PC-9 (cell line): ENCODE measurements at regions of chr5 and their contacts with region 1.

Region 1: DNA sequence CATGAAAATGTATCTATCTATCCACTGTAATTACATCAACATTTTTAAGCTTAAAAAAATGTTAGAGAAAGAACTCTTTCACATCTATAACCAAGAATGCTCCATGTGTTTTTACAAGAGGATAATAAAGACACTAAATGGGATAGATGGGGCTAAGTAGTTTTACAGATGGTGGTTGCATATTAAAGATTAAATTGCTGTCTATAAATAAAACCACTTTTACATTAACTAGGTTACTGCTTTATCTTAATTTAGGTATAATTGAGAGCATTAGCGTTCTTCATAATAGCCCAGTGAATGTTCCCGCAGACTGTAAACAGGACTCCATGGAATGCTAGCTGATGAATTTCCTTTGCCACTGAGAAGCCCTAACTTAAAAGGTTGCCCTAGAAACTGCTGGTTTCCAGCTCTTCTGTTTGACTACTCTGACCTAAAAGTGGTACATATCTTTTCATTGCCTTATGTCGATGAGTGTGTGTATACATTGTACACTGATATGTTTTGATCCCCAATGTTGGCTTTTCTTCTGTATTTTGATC is 117.9 kb downstream of the SGCD start:
- DNase-seq: no peak
- H3K4me3 ChIP-seq: no peak overlapping the region
- H3K27ac ChIP-seq: no peak overlapping the region
- H3K4me1 ChIP-seq: no peaks in the 10 kb centered on the region
- H3K27me3 ChIP-seq: peaks cover 9% of the 10 kb centered on the region; the same call in 1 of the 2 replicates
- CTCF ChIP-seq: no peak

Region 2: GRCh38 chr5:155969537-155969936 is 475.3 kb before region 1 on chr5:
- CTCF ChIA-PET with region 1: no interaction called
- POLR2A ChIA-PET with region 1: no interaction called
- intact Hi-C with region 1: no loop called
- DNase-seq: no peak
- H3K4me3 ChIP-seq: no peak overlapping the region
- H3K27ac ChIP-seq: no peak overlapping the region
- H3K4me1 ChIP-seq: no peaks in the 10 kb centered on the region
- H3K27me3 ChIP-seq: no peaks in the 10 kb centered on the region
- CTCF ChIP-seq: no peak

Region 3: DNA sequence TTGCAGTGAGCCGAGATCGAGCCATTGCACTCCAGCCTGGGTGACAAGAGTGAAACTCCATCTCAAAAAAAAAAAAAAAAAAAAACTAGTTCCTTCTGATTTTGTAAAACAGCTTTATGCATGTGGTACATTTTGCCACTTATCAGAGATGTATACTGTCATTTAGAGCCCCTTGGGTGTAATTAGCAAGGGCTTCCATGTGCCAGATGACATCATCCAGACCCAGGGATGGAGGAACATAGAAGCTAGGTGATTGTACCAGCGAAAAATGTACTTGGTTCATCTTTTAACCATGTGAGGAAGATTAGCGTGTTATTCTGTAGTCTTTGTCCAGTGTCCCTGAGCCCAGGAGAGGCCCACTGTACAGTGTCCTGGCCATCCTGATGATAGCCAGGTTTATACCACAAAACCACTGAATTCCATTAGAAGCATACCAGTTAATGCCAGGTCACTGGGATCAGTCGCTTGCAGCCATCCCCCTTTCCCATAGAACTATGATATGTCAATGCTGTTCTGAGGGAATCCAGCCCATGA is 357.2 kb before region 1 on chr5:
- CTCF ChIA-PET with region 1: no interaction called
- POLR2A ChIA-PET with region 1: no interaction called
- intact Hi-C with region 1: no loop called
- DNase-seq: no peak
- H3K4me3 ChIP-seq: no peak overlapping the region
- H3K27ac ChIP-seq: no peak overlapping the region
- H3K4me1 ChIP-seq: no peaks in the 10 kb centered on the region
- H3K27me3 ChIP-seq: no peaks in the 10 kb centered on the region
- CTCF ChIP-seq: no peak

Region 4: GRCh38 chr5:156326718-156327259 is 118.0 kb before region 1 on chr5 and contains the start of gene SGCD:
- CTCF ChIA-PET with region 1: no interaction called
- POLR2A ChIA-PET with region 1: no interaction called
- intact Hi-C with region 1: no loop called
- DNase-seq: no peak
- H3K4me3 ChIP-seq: no peak within 1 kb of the TSS
- H3K27ac ChIP-seq: no peak within 1 kb of the TSS
- H3K4me1 ChIP-seq: no peaks in the 10 kb centered on the region
- H3K27me3 ChIP-seq: peaks cover 34% of the 10 kb centered on the region
- CTCF ChIP-seq: no peak
- total RNA-seq, gene SGCD: not detected in 2 replicates

Region 5: DNA sequence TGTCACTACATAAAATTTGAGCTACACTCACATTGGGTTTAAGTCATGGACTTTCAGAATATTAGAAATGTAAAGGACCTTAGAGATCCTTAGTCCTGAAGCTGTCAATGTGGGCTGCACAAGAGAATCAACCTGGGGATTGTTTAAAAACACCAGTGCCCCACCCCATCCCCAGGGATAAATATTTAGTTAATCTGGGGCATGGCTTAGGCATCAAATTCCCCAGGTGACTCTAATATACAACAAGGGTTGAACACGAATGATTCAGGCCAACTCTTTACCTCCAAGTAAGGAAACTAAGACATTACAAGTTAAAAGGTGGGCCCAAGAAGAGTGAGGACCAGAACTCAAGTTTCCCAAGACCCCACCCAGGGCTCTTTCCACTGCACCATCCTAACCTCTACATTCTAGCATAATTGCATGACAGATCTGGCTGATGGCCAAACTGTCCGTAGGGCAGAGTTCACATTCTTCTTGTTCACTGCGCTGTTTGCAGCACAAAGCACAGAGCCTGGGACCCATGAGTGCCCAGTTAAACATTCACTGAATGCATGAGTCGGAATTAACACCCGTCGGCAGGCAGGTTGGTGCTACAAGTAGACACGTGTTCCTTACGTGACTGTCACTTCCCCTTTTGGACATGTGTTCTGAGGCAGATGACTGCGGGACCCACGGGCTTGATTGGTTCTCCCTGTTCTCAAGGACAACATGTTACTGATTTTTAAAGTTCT is 846.3 kb after region 1 on chr5:
- CTCF ChIA-PET with region 1: no interaction called
- POLR2A ChIA-PET with region 1: no interaction called
- intact Hi-C with region 1: loop called (anchors 5 kb)
- DNase-seq: no peak
- H3K4me3 ChIP-seq: no peak overlapping the region
- H3K27ac ChIP-seq: no peak overlapping the region
- H3K4me1 ChIP-seq: no peaks in the 10 kb centered on the region
- H3K27me3 ChIP-seq: peaks cover 40% of the 10 kb centered on the region
- CTCF ChIP-seq: no peak